Left ventricle myocardium inferior (tissue), 1 donor: ENCODE measurements at regions of chr3 and their contacts with region 1.

Region 1: GRCh38 chr3:112111785-112112402 is 21.2 kb downstream of the GCSAM start:
- DNase-seq: no peak
- H3K4me3 ChIP-seq: no peak overlapping the region
- H3K27ac ChIP-seq: no peak overlapping the region
- H3K4me1 ChIP-seq: peaks cover 12% of the 10 kb centered on the region
- H3K27me3 ChIP-seq: no peaks in the 10 kb centered on the region
- CTCF ChIP-seq: peak; percentile 83

Region 2: DNA sequence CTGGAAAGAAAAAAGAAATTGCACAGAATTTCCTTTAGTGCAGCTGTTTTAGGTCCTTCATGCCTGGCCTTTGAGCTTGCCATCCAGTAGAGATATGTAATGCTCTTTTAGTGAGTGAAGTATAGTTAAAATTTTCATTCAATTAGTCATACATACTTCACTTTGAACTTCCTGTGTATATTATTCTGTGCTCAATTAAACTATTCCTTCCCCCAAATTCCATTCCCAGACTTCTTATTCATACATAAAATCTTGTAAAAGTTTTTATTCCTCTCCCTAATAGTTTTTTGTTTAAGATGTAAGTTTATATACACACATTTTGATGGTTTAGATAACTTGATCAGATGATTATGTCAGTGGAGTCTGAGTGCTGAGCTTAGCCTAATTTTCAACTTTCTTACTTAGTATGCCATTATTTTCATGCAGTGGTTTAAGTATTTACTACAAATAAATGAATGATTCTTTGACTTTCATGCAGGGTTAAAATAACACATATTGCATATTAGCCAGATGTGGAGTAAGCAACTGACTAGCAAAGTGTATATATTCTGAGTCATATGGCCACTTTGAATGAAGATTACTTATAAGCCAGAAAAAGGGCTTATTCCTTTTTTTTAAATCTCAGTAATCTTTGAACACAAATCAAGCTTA is 175.6 kb before region 1 on chr3:
- intact Hi-C with region 1: no loop called
- DNase-seq: no peak
- H3K4me3 ChIP-seq: no peak overlapping the region
- H3K27ac ChIP-seq: no peak overlapping the region
- H3K4me1 ChIP-seq: peaks cover 46% of the 10 kb centered on the region
- H3K27me3 ChIP-seq: no peaks in the 10 kb centered on the region
- CTCF ChIP-seq: no peak

Region 3: GRCh38 chr3:112293368-112294321 is 181.8 kb after region 1 on chr3 and contains the start of gene SLC9C1:
- intact Hi-C with region 1: loop called (anchors 10 kb)
- DNase-seq: no peak
- H3K4me3 ChIP-seq: peak within 1 kb of the TSS; percentile 68
- H3K27ac ChIP-seq: peak within 1 kb of the TSS; percentile 77
- H3K4me1 ChIP-seq: peaks cover 11% of the 10 kb centered on the region
- H3K27me3 ChIP-seq: no peaks in the 10 kb centered on the region
- CTCF ChIP-seq: peak; percentile 72
- total RNA-seq, gene SLC9C1: 1.3 TPM

Region 4: DNA sequence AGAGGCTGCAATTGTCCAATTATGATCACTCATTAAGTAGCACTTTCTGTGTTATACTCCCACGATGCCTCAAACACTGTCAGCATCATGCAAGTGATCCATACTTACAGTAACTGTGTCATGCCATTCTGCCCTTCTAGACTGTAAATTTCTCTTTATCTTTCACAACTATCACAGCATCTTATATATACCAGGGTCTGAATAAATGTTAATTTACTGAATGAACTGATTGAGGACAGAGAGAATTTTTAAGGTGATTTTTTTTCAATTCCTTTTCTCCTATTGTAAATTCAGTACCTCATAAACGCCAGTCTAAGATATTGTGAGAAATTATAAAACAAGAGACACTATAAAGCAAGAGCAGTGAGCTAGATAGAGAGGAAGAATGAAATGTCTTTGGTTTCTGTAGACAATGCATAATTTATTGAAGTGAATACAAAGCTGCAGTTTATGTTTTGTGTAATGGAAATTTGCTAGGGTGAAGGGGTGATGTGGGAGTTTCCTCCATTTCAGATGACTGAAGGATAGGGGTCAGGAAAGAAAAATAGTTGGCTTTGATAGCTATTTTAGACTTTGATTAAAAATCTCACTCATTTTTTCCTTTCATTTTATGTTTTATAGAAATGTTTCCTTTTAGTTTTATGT is 238.4 kb after region 1 on chr3:
- intact Hi-C with region 1: no loop called
- DNase-seq: no peak
- H3K4me3 ChIP-seq: no peak overlapping the region
- H3K27ac ChIP-seq: peak overlapping the region; percentile 42
- H3K4me1 ChIP-seq: peaks cover 43% of the 10 kb centered on the region
- H3K27me3 ChIP-seq: no peaks in the 10 kb centered on the region
- CTCF ChIP-seq: no peak